PC-3 (cell line): ENCODE measurements at regions of chr13 and their contacts with region 1.

Region 1: DNA sequence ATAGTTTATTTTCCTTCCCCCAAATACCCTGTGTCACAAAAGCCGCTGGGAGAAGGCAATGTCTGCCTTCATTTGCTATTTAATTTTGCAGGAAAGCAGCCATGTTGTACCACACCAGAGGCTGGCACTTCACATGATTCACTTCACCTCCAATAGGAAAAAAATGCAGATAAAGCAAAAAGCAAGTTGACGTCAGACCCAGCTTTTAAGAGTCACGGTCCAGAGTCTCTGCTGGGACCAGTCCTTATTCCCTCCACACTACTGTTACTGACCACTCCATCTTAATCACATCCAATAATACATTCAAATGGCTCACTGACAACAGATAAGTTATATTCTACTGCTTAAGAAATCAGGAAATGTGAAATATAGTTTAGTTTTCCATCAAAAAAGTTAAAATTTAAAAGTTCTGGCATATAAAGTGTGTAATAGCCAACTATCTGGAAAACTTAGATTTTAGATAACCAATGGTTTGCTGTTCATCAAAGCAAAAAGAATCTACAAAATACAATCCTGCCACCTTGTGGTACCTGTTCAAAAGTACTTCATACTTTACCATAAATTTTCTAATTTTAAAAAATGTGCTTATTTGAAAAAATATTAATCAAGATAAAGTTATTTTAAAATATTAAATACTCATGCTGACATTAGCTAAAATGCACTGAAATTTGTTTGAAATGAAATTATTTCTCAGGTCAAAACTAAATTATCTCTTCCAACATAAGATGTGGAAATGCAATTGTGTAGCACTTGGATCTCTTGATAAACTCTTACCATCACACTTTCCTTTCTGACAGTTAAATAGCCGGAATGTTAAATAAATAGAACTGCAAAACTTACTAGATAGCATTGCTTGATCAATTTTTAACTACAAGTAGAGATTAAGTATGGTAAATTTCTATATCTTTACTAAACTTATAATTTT is 97.3 kb downstream of the SERP2 start:
- DNase-seq: peak; percentile 50
- ATAC-seq: no peak; the same call in 1 of the 2 replicates
- H3K4me3 ChIP-seq: peak overlapping the region; percentile 49; the same call in 1 of the 2 replicates
- H3K27ac ChIP-seq: peak overlapping the region; percentile 54
- H3K4me1 ChIP-seq: peaks cover 45% of the 10 kb centered on the region
- H3K27me3 ChIP-seq: no peaks in the 10 kb centered on the region
- CTCF ChIP-seq: peak; percentile 54

Region 2: GRCh38 chr13:43905435-43906031 is 565.4 kb before region 1 on chr13:
- CTCF ChIA-PET with region 1: no interaction called
- POLR2A ChIA-PET with region 1: no interaction called
- intact Hi-C with region 1: loop called (anchors 1 kb)
- DNase-seq: peak; percentile 80
- ATAC-seq: peak; percentile 59
- H3K4me3 ChIP-seq: no peak overlapping the region
- H3K27ac ChIP-seq: no peak overlapping the region
- H3K4me1 ChIP-seq: peaks cover 20% of the 10 kb centered on the region
- H3K27me3 ChIP-seq: no peaks in the 10 kb centered on the region
- CTCF ChIP-seq: peak; percentile 76

Region 3: DNA sequence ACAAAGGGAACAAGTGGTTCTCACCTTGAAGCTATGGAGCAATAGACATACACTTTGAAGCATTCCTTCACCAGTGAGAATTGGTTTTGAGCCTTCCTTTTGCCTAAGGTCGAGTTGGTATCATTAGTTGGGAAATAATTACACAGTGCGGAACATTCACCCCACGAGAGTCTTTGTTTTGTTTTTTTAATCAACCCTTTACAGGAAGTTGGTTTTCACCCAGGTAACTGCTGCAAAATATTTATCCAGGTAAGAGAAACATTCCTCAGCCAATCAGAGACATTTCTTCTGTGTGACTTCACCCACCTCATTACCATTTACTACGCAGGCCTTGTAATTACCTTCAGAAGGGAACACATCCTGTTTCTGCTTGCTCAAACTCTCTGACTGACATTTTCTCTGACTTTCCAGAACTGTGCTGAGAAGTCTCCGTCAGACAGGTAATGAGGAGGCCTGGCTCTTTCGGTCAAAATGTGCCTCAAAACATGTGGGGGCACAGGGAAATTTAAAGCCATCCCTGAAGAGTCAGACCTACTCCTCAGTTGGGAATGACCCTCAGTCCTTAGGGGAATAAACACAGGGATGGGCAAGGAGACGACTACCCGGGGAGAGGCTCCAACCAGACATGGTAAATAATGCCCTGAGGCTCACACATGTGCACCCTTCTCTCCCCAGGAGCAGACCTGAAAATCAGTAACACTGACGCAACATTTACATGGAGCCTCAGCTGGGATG is 120.0 kb before region 1 on chr13:
- CTCF ChIA-PET with region 1: no interaction called
- POLR2A ChIA-PET with region 1: no interaction called
- intact Hi-C with region 1: no loop called
- DNase-seq: no peak
- ATAC-seq: no peak
- H3K4me3 ChIP-seq: no peak overlapping the region
- H3K27ac ChIP-seq: no peak overlapping the region
- H3K4me1 ChIP-seq: no peaks in the 10 kb centered on the region
- H3K27me3 ChIP-seq: no peaks in the 10 kb centered on the region
- CTCF ChIP-seq: no peak

Region 4: GRCh38 chr13:44629465-44630183 is 158.7 kb after region 1 on chr13:
- CTCF ChIA-PET with region 1: no interaction called
- POLR2A ChIA-PET with region 1: no interaction called
- intact Hi-C with region 1: no loop called
- DNase-seq: peak; percentile 6
- ATAC-seq: no peak
- H3K4me3 ChIP-seq: no peak overlapping the region
- H3K27ac ChIP-seq: no peak overlapping the region
- H3K4me1 ChIP-seq: peaks cover 9% of the 10 kb centered on the region
- H3K27me3 ChIP-seq: no peaks in the 10 kb centered on the region
- CTCF ChIP-seq: no peak

Region 5: GRCh38 chr13:45206340-45206739 is 735.4 kb after region 1 on chr13:
- CTCF ChIA-PET with region 1: no interaction called
- POLR2A ChIA-PET with region 1: no interaction called
- intact Hi-C with region 1: no loop called
- DNase-seq: peak; percentile 89
- ATAC-seq: peak; percentile 96
- H3K4me3 ChIP-seq: no peak overlapping the region
- H3K27ac ChIP-seq: peak overlapping the region; percentile 80
- H3K4me1 ChIP-seq: peaks cover 50% of the 10 kb centered on the region
- H3K27me3 ChIP-seq: no peaks in the 10 kb centered on the region
- CTCF ChIP-seq: no peak

Region 6: DNA sequence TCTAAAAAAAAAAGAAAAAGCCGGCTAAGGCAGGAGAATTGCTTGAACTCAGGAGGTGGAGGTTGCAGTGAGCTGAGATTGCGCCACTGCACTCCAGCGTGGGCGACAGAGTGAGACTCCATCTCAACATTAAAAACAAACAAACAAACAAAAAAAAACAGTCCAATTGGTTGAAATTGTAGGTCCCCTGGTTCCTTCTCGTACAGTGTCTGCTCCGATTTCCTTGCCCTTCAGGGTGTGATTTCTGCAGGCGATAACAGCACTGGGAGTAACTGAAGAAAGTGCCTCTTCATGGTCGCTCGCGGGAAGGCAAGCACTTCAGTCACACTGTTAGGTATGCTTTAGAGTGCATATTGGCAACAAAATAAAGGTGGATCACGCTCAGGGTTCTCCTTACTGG is 830.3 kb after region 1 on chr13:
- CTCF ChIA-PET with region 1: no interaction called
- POLR2A ChIA-PET with region 1: no interaction called
- intact Hi-C with region 1: loop called (anchors 10 kb)
- DNase-seq: no peak
- ATAC-seq: peak; percentile 30; the same call in 1 of the 2 replicates
- H3K4me3 ChIP-seq: no peak overlapping the region
- H3K27ac ChIP-seq: no peak overlapping the region
- H3K4me1 ChIP-seq: no peaks in the 10 kb centered on the region
- H3K27me3 ChIP-seq: no peaks in the 10 kb centered on the region
- CTCF ChIP-seq: no peak